PC-9 (cell line): ENCODE measurements at regions of chr10 and their contacts with region 1.

Region 1: DNA sequence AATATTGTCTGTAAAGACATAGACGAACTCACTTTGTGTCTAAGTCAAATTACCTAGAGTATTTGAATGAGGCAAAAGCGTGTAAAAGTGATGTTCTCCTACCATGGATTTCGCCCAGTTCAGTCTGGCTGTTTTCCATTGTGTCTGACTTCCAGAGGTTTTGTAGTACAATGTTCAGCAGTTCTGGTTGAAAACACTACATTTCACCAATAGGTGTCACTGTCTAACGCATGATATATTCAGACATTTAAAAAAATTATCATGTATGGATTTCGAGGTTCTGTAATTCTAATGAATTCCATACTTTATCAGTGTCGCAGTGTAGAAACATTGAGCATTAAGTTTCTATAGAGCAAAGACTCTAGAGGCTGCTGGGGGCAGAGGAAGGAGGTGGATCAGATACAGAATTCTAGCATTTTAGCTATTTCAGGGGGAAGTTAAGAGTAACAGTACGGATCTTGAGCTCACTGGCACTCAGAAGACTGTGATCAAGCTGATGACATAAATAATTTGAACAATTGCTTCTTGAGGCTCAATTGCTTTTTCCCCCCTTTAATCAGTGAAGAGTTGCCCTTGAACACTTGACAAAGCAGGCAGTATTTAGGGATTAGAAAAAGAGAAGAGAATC is 196.9 kb upstream of the RHOBTB1 start:
- DNase-seq: peak in 1 of 2 experiments; percentile 42
- H3K4me3 ChIP-seq: no peak overlapping the region
- H3K27ac ChIP-seq: no peak overlapping the region
- H3K4me1 ChIP-seq: no peaks in the 10 kb centered on the region
- H3K27me3 ChIP-seq: no peaks in the 10 kb centered on the region
- CTCF ChIP-seq: peak; percentile 76

Region 2: GRCh38 chr10:61465901-61466632 is 325.2 kb after region 1 on chr10:
- CTCF ChIA-PET with region 1: no interaction called
- POLR2A ChIA-PET with region 1: no interaction called
- intact Hi-C with region 1: no loop called
- DNase-seq: no peak
- H3K4me3 ChIP-seq: no peak overlapping the region
- H3K27ac ChIP-seq: no peak overlapping the region
- H3K4me1 ChIP-seq: no peaks in the 10 kb centered on the region
- H3K27me3 ChIP-seq: no peaks in the 10 kb centered on the region
- CTCF ChIP-seq: no peak

Region 3: GRCh38 chr10:61733358-61733940 is 592.6 kb after region 1 on chr10:
- CTCF ChIA-PET with region 1: no interaction called
- POLR2A ChIA-PET with region 1: no interaction called
- intact Hi-C with region 1: loop called (anchors 10 kb)
- DNase-seq: peak in 1 of 2 experiments; percentile 9
- H3K4me3 ChIP-seq: no peak overlapping the region
- H3K27ac ChIP-seq: no peak overlapping the region
- H3K4me1 ChIP-seq: no peaks in the 10 kb centered on the region
- H3K27me3 ChIP-seq: no peaks in the 10 kb centered on the region
- CTCF ChIP-seq: peak; percentile 79